PC-9 (cell line): ENCODE measurements at regions of chr4 and their contacts with region 1.

Region 1: GRCh38 chr4:142846729-142847596 is 862 bp upstream of the INPP4B start:
- DNase-seq: peak; percentile 59 to 73
- H3K4me3 ChIP-seq: peak overlapping the region; percentile 91
- H3K27ac ChIP-seq: no peak overlapping the region
- H3K4me1 ChIP-seq: peaks cover 22% of the 10 kb centered on the region
- H3K27me3 ChIP-seq: no peaks in the 10 kb centered on the region
- CTCF ChIP-seq: peak; percentile 72

Region 2: GRCh38 chr4:141158219-141158618 is 1688.7 kb before region 1 on chr4:
- CTCF ChIA-PET with region 1: no interaction called
- POLR2A ChIA-PET with region 1: no interaction called
- intact Hi-C with region 1: loop called (anchors 1 kb)
- DNase-seq: no peak
- H3K4me3 ChIP-seq: no peak overlapping the region
- H3K27ac ChIP-seq: no peak overlapping the region
- H3K4me1 ChIP-seq: no peaks in the 10 kb centered on the region
- H3K27me3 ChIP-seq: no peaks in the 10 kb centered on the region
- CTCF ChIP-seq: peak; percentile 73

Region 3: DNA sequence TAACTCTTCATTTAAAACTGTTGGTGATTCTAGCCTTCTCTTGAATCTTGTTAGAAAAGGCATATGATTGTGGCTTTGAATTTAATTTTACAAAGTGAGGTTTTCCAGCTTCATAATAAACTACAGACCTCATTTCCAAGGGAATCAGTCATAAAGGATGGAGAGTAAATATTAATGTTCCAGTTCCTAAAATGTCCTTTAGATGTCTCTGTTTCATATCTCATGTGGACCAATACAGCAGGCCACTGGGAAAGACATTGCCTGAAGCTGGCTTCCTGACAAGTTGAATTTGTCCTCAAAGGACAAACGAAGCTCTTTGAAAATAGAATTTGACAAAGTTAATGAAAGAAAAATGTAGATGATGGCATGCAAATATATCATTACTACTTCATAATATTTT is 1500.8 kb before region 1 on chr4:
- CTCF ChIA-PET with region 1: interaction called, 5 read pairs
- POLR2A ChIA-PET with region 1: no interaction called
- intact Hi-C with region 1: loop called (anchors 1 kb)
- DNase-seq: no peak
- H3K4me3 ChIP-seq: no peak overlapping the region
- H3K27ac ChIP-seq: no peak overlapping the region
- H3K4me1 ChIP-seq: peaks cover 9% of the 10 kb centered on the region
- H3K27me3 ChIP-seq: no peaks in the 10 kb centered on the region
- CTCF ChIP-seq: peak; percentile 62

Region 4: GRCh38 chr4:142126890-142127497 is 720.0 kb before region 1 on chr4:
- CTCF ChIA-PET with region 1: interaction called, 4 read pairs
- POLR2A ChIA-PET with region 1: no interaction called
- intact Hi-C with region 1: loop called (anchors 1 kb)
- DNase-seq: peak; percentile 38 to 46
- H3K4me3 ChIP-seq: no peak overlapping the region
- H3K27ac ChIP-seq: no peak overlapping the region
- H3K4me1 ChIP-seq: no peaks in the 10 kb centered on the region
- H3K27me3 ChIP-seq: no peaks in the 10 kb centered on the region
- CTCF ChIP-seq: peak; percentile 89

Region 5: GRCh38 chr4:142265536-142265935 is 581.4 kb before region 1 on chr4:
- CTCF ChIA-PET with region 1: no interaction called
- POLR2A ChIA-PET with region 1: no interaction called
- intact Hi-C with region 1: loop called (anchors 10 kb)
- DNase-seq: peak in 1 of 2 experiments; percentile 53
- H3K4me3 ChIP-seq: 0 out of 2 replicates have a peak overlapping the region, but pooled peaks have one; percentile 17
- H3K27ac ChIP-seq: peak overlapping the region; percentile 75
- H3K4me1 ChIP-seq: peaks cover 25% of the 10 kb centered on the region
- H3K27me3 ChIP-seq: no peaks in the 10 kb centered on the region
- CTCF ChIP-seq: no peak

Region 6: DNA sequence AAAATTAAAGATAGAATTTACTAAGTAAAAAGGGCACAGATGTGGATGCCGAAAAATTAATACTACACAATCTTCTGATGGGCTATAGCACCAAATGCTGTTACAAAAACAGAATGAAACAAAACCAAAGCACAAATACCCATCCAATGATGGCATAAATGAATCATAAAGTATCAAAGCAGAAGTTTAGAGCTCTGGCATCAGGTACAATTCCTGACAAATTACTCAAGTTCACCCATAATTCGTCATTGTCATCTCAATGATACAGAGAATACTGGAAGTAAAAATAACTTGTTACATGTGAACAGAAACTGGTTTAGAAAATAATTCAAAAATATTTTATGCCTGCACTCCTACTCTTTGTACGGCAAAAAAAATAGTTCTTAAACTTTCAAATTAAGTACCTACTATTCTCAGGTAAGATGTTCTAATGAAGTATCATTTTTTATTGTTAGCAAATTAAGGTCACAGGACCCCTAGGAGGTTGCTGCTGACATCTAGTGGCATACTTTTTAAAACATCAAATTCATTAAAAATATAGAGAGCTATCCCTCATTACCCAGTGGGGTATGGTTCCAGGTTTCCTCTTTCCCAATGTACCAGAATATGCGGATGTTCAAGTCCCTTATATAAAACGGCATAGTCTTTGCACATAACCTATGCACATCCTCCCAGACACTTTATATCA is 127.0 kb before region 1 on chr4:
- CTCF ChIA-PET with region 1: no interaction called
- POLR2A ChIA-PET with region 1: no interaction called
- intact Hi-C with region 1: loop called (anchors 2 kb)
- DNase-seq: peak in 1 of 2 experiments; percentile 65
- H3K4me3 ChIP-seq: no peak overlapping the region
- H3K27ac ChIP-seq: peak overlapping the region; percentile 64
- H3K4me1 ChIP-seq: peaks cover 16% of the 10 kb centered on the region
- H3K27me3 ChIP-seq: no peaks in the 10 kb centered on the region
- CTCF ChIP-seq: peak; percentile 63